ENCODE measurements at regions of chr10 and their contacts with region 1.

Region 1: DNA sequence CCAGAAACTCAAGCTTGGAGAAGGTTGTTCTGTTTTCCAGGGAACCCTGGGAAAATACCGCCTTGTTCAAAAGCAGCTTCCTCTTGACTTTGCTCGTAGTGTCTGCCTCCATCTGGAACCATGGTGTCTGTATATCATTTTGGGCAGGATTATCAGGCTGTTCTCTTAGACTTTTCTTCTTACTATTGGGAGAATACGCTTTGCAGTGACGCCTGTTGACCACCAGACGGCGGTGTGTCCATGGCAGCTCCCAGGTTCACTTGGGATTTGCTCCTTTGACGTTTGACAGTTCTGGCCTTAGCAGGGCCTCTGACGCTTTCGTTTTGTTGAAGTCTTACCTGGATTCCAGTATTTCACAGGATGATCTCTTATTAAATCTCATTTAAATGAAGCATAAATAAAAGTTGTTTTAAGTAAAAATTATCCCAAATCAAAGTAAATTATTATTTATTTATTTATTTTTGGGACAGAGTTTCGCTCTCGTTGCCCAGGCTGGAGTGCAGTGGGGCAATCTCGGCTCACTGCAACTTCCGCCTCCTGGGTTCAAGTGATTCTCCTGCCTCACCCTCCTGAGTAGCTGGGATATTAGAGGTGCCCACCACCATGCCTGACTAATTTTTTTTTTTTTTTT is 41.8 kb upstream of the GJD4 start:
- DNase-seq: peak; percentile 50 to 55
- ATAC-seq: peak in 4 of 8 donors; percentile 13 to 56 (median 26)
- H3K4me3 ChIP-seq: no peak overlapping the region
- H3K27ac ChIP-seq: peak overlapping the region in 5 of 10 donors; percentile 63 to 79 (median 67)
- H3K4me1 ChIP-seq: peaks cover 17 to 60% (median 54%) of the 10 kb centered on the region in 9 donors
- H3K27me3 ChIP-seq: no peaks in the 10 kb centered on the region
- CTCF ChIP-seq: peak; percentile 89 to 100 (median 93)

Region 2: DNA sequence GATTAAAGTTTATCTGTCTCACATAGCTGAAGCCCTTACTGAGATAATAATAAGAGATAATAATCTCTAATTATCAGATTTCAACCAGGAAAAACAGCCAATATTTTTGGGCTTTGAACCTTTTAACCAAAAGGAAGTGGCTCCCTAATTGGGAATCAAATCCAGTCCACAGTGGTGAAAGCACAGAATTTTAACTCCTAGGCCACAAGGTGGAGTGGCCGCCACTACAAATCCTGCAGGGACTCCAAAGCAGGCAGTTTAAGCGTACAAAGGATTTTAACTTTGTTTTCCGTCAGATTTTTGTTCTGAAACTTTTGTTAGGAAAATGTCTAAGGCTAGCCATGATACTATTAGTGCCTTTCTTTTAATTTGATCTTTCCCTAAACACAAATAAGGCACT is 326.6 kb before region 1 on chr10:
- intact Hi-C with region 1: loop called in 4 of 10 experiments (anchors 5 to 10 kb)
- DNase-seq: no peak
- ATAC-seq: no peak
- H3K4me3 ChIP-seq: no peak overlapping the region
- H3K27ac ChIP-seq: no peak overlapping the region
- H3K4me1 ChIP-seq: peaks cover 0 to 5% (median 0%) of the 10 kb centered on the region in 9 donors
- H3K27me3 ChIP-seq: no peaks in the 10 kb centered on the region
- CTCF ChIP-seq: peak in 8 of 9 donors; percentile 16 to 58 (median 36)

Region 3: DNA sequence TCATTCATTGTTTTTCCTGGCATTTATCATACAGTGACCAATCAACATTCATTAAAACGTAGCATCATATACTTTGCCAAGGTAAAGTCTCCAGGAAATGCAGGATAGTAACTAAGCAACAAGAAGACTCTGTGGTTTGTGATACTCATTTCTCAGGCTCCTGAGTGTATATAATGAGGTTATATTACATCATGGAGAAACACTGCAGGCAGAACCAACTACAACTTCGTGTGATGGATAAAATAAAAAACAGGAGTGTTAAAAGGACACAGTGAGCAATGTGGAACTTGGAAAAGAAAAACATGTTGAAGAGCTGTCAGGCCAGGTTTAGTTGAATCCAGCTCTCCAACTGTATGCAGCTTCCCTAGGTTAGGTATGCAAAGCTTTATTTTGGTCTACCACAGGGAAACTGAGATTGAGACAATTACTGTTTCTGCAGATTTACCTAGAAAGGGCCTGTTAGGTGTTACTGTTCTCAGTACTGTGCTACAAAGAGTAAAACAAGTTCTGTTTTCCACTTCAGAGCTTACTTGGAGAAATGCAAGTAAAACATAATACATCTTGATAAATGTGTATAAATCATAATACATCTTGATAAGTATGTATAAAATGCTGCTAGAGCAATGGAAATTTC is 234.9 kb before region 1 on chr10:
- intact Hi-C with region 1: loop called in 3 of 10 experiments (anchors 5 to 10 kb)
- DNase-seq: no peak
- ATAC-seq: peak in 1 of 8 donors; percentile 12
- H3K4me3 ChIP-seq: no peak overlapping the region
- H3K27ac ChIP-seq: peak overlapping the region in 4 of 10 donors; percentile 2 to 70 (median 26)
- H3K4me1 ChIP-seq: peaks cover 5 to 70% (median 46%) of the 10 kb centered on the region in 9 donors
- H3K27me3 ChIP-seq: no peaks in the 10 kb centered on the region
- CTCF ChIP-seq: no peak

Region 4: GRCh38 chr10:35379226-35380137 is 183.9 kb before region 1 on chr10:
- intact Hi-C with region 1: loop called in 1 of 10 experiments (anchors 10 kb)
- DNase-seq: peak; percentile 48 to 80
- ATAC-seq: peak; percentile 76 to 93 (median 88)
- H3K4me3 ChIP-seq: peak overlapping the region in 3 of 10 donors; percentile 6 to 22 (median 11)
- H3K27ac ChIP-seq: peak overlapping the region; percentile 9 to 94 (median 82)
- H3K4me1 ChIP-seq: peaks cover 23 to 97% (median 74%) of the 10 kb centered on the region in 9 donors
- H3K27me3 ChIP-seq: no peaks in the 10 kb centered on the region
- CTCF ChIP-seq: peak in 6 of 9 donors; percentile 22 to 43 (median 31)

Region 5: GRCh38 chr10:35495521-35496119 is 67.8 kb before region 1 on chr10:
- intact Hi-C with region 1: loop called in 1 of 10 experiments (anchors 10 kb)
- DNase-seq: no peak
- ATAC-seq: peak in 6 of 8 donors; percentile 45 to 92 (median 63)
- H3K4me3 ChIP-seq: no peak overlapping the region
- H3K27ac ChIP-seq: peak overlapping the region in 9 of 10 donors; percentile 9 to 50 (median 29)
- H3K4me1 ChIP-seq: peaks cover 8 to 69% (median 44%) of the 10 kb centered on the region in 9 donors
- H3K27me3 ChIP-seq: no peaks in the 10 kb centered on the region
- CTCF ChIP-seq: no peak

Region 6: DNA sequence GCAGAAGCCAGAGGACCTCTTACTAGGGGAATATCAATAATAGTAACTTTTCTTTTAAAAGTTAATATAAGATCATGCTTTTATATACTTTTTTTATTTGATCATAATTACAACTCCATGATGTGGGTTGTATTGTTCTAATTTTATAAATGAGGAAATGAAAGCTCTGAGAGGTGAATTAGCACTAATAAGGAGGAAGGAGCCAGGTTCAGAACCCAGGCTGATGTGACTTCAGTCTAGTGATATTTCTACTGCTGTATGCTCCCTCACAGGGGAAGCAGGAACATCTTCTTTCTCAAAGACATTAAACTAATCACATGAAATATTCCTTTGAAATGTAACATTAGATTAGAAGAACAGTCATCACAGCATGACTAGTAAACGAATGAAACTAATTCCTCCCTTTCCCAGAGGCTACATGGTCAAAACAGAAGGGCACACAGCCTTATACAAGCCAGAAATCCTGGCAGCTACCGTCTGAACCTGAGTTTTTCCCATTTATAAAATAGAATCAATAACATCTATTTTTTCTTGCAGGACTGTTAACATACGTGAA is 39.6 kb before region 1 on chr10:
- intact Hi-C with region 1: no loop called
- DNase-seq: no peak
- ATAC-seq: no peak
- H3K4me3 ChIP-seq: no peak overlapping the region
- H3K27ac ChIP-seq: no peak overlapping the region
- H3K4me1 ChIP-seq: peaks cover 0 to 21% (median 6%) of the 10 kb centered on the region in 9 donors
- H3K27me3 ChIP-seq: no peaks in the 10 kb centered on the region
- CTCF ChIP-seq: no peak